GM12878 (cell line): ENCODE measurements at regions of chr6 and their contacts with region 1.

Region 1: GRCh38 chr6:18264219-18264922 is at the start of gene DEK:
- DNase-seq: no peak
- ATAC-seq: peak; percentile 44
- H3K4me3 ChIP-seq: peak within 1 kb of the TSS; percentile 70
- H3K27ac ChIP-seq: peak within 1 kb of the TSS; percentile 96
- H3K4me1 ChIP-seq: peaks cover 28% of the 10 kb centered on the region
- H3K27me3 ChIP-seq: no peaks in the 10 kb centered on the region
- CTCF ChIP-seq: peak; percentile 42 to 50 (median 46); a peak in 5 of 6 replicates
- EP300 ChIP-seq: no peak
- POLR2A ChIP-seq: peak; percentile 79
- RAD21 ChIP-seq: peak; percentile 28; the same call in 1 of the 2 replicates
- polyA plus RNA-seq, gene DEK: 111 to 117 TPM

Region 2: GRCh38 chr6:17998456-17998855 is 265.9 kb before region 1 on chr6:
- CTCF ChIA-PET with region 1: no interaction called
- POLR2A ChIA-PET with region 1: no interaction called
- RAD21 ChIA-PET with region 1: no interaction called
- SMC1A ChIA-PET with region 1: no interaction called
- in situ Hi-C with region 1: loop called (anchors 10 kb)
- intact Hi-C with region 1: no loop called
- DNase-seq: no peak
- ATAC-seq: no peak
- H3K4me3 ChIP-seq: no peak overlapping the region
- H3K27ac ChIP-seq: no peak overlapping the region
- H3K4me1 ChIP-seq: peaks cover 7% of the 10 kb centered on the region
- H3K27me3 ChIP-seq: peaks cover 0 to 3% of the 10 kb centered on the region in 2 experiments; a peak in 2 of 4 replicates
- CTCF ChIP-seq: no peak
- EP300 ChIP-seq: no peak
- POLR2A ChIP-seq: no peak
- RAD21 ChIP-seq: no peak

Region 3: GRCh38 chr6:18155150-18155863 is 109.1 kb before region 1 on chr6 and contains the start of gene KDM1B:
- CTCF ChIA-PET with region 1: interaction called, 3 read pairs
- POLR2A ChIA-PET with region 1: interaction called, 4 read pairs
- RAD21 ChIA-PET with region 1: interaction called, 5 read pairs
- SMC1A ChIA-PET with region 1: interaction called, 4 read pairs
- in situ Hi-C with region 1: no loop called
- intact Hi-C with region 1: loop called (anchors 2 kb)
- DNase-seq: peak; percentile 86
- ATAC-seq: peak; percentile 90
- H3K4me3 ChIP-seq: peak within 1 kb of the TSS; percentile 85
- H3K27ac ChIP-seq: peak within 1 kb of the TSS; percentile 81
- H3K4me1 ChIP-seq: peaks cover 9% of the 10 kb centered on the region
- H3K27me3 ChIP-seq: no peaks in the 10 kb centered on the region
- CTCF ChIP-seq: no peak
- EP300 ChIP-seq: no peak
- POLR2A ChIP-seq: peak; percentile 79
- RAD21 ChIP-seq: no peak
- polyA plus RNA-seq, gene KDM1B: 1.7 to 2.9 TPM

Region 4: GRCh38 chr6:18192026-18192425 is 72.3 kb before region 1 on chr6:
- CTCF ChIA-PET with region 1: no interaction called
- POLR2A ChIA-PET with region 1: no interaction called
- RAD21 ChIA-PET with region 1: no interaction called
- SMC1A ChIA-PET with region 1: no interaction called
- in situ Hi-C with region 1: no loop called
- intact Hi-C with region 1: no loop called
- DNase-seq: no peak
- ATAC-seq: no peak
- H3K4me3 ChIP-seq: no peak overlapping the region
- H3K27ac ChIP-seq: no peak overlapping the region
- H3K4me1 ChIP-seq: no peaks in the 10 kb centered on the region
- H3K27me3 ChIP-seq: no peaks in the 10 kb centered on the region
- CTCF ChIP-seq: no peak
- EP300 ChIP-seq: no peak
- POLR2A ChIP-seq: no peak
- RAD21 ChIP-seq: no peak

Region 5: DNA sequence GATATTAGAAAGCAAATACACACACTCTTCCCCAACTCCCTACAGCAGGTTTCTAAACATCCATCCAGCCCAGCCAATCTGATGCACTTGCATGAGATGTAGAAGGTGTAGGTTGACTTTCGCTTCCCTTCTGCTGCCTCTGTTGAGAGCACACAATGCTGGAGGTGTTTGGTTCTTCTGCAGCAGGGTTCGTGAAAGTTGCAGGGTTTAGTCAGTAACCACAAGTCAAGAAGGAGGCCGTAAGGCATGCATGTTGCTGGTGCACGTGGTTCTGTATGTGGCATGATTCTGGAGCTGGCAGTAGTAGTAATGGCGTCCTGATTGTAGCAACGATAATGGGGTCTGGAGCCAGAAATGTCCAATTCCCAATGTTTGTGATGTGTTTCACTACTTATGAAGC is 53.0 kb before region 1 on chr6:
- CTCF ChIA-PET with region 1: interaction called, 4 read pairs
- POLR2A ChIA-PET with region 1: no interaction called
- RAD21 ChIA-PET with region 1: interaction called, 8 read pairs
- SMC1A ChIA-PET with region 1: interaction called, 8 read pairs
- in situ Hi-C with region 1: no loop called
- intact Hi-C with region 1: loop called (anchors 1 kb)
- DNase-seq: peak; percentile 91
- ATAC-seq: peak; percentile 87
- H3K4me3 ChIP-seq: no peak overlapping the region
- H3K27ac ChIP-seq: peak overlapping the region; percentile 45; the same call in 1 of the 2 replicates
- H3K4me1 ChIP-seq: peaks cover 53% of the 10 kb centered on the region
- H3K27me3 ChIP-seq: no peaks in the 10 kb centered on the region
- CTCF ChIP-seq: no peak
- EP300 ChIP-seq: peak; percentile 33 to 86; a peak in 2 of 4 replicates
- POLR2A ChIP-seq: peak; percentile 68
- RAD21 ChIP-seq: peak; percentile 25; the same call in 1 of the 2 replicates

Region 6: GRCh38 chr6:18242062-18242851 is 22.1 kb before region 1 on chr6:
- CTCF ChIA-PET with region 1: no interaction called
- POLR2A ChIA-PET with region 1: interaction called, 4 read pairs
- RAD21 ChIA-PET with region 1: interaction called, 17 read pairs
- SMC1A ChIA-PET with region 1: interaction called, 18 read pairs
- in situ Hi-C with region 1: no loop called
- intact Hi-C with region 1: no loop called
- DNase-seq: no peak
- ATAC-seq: no peak
- H3K4me3 ChIP-seq: no peak overlapping the region
- H3K27ac ChIP-seq: no peak overlapping the region; the same call in 1 of the 2 replicates
- H3K4me1 ChIP-seq: peaks cover 7% of the 10 kb centered on the region
- H3K27me3 ChIP-seq: no peaks in the 10 kb centered on the region
- CTCF ChIP-seq: no peak
- EP300 ChIP-seq: no peak
- POLR2A ChIP-seq: no peak
- RAD21 ChIP-seq: no peak

Region 7: DNA sequence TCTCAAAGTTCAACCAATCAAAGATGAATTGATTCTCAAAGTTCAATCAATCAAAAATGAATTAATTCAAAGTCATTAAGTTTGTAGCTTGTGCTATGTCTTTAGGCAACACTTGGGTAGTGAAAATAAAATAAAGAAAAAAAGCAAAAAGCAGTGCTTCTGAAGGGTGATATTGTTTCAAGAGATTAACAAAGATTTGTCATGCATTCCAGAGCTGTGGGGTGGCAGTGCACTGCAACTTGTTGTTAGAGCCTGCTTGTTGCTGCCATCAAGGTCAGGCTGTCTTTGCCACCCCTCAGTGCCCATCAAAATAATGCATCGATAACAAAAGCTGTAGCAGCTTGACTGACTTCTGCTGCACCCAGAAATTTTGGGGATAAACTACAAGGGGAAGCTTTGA is 251.4 kb after region 1 on chr6:
- CTCF ChIA-PET with region 1: no interaction called
- POLR2A ChIA-PET with region 1: no interaction called
- RAD21 ChIA-PET with region 1: no interaction called
- SMC1A ChIA-PET with region 1: no interaction called
- in situ Hi-C with region 1: no loop called
- intact Hi-C with region 1: no loop called
- DNase-seq: no peak
- ATAC-seq: no peak
- H3K4me3 ChIP-seq: no peak overlapping the region
- H3K27ac ChIP-seq: no peak overlapping the region
- H3K4me1 ChIP-seq: no peaks in the 10 kb centered on the region
- H3K27me3 ChIP-seq: no peaks in the 10 kb centered on the region
- CTCF ChIP-seq: no peak
- EP300 ChIP-seq: no peak
- POLR2A ChIP-seq: no peak
- RAD21 ChIP-seq: no peak